ENCODE measurements at regions of chr13 and their contacts with region 1.

Region 1: DNA sequence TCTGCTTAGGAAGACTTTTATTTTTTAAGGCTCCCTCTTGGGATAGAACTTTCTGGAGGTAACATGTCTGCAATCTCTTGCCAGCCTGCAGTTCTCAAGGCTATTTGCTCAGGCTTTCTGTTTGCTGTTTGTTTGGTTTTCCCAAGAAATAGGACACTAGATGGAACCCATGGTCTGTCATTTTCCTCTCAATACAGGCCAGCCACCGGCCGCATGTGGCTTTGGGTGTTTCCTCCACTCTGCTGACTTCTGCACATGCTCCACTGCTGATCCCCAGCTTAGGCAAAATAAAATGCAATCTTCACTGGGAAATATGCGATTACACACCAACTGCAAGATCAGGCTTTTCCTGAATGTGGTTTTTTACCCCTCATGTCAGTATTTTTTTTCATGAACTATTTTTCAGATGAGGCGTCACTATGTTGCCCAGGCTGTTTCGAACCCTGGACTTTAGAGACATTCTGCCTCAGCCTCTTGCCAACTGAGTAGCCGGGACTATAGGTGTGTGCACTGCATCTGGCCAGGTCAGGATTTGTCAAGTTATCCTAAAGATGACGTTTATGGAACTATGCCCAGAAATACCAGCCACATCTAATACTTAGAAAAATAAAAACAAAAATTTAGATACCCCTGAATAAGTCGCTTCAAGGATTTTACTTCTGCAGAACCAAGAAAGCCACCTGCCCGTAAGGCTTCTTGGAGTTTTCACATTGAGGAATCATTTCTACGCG is 94.3 kb upstream of the PABPC3 start:
- DNase-seq: no peak
- ATAC-seq: no peak
- H3K4me3 ChIP-seq: no peak overlapping the region
- H3K27ac ChIP-seq: no peak overlapping the region
- H3K4me1 ChIP-seq: no peaks in the 10 kb centered on the region
- H3K27me3 ChIP-seq: no peaks in the 10 kb centered on the region

Region 2: GRCh38 chr13:25037057-25037813 is 35.6 kb after region 1 on chr13:
- intact Hi-C with region 1: loop called in 1 of 4 experiments (anchors 2 kb)
- DNase-seq: no peak
- ATAC-seq: peak in 1 of 2 donors; percentile 68
- H3K4me3 ChIP-seq: no peak overlapping the region
- H3K27ac ChIP-seq: no peak overlapping the region
- H3K4me1 ChIP-seq: no peaks in the 10 kb centered on the region
- H3K27me3 ChIP-seq: peaks cover 2% of the 10 kb centered on the region

Region 3: GRCh38 chr13:25286969-25287961 is 285.6 kb after region 1 on chr13 and contains the start of gene MTMR6:
- intact Hi-C with region 1: no loop called
- DNase-seq: peak; percentile 93 to 98 (median 96)
- ATAC-seq: peak; percentile 98
- H3K4me3 ChIP-seq: peak within 1 kb of the TSS; percentile 96
- H3K27ac ChIP-seq: peak within 1 kb of the TSS; percentile 76
- H3K4me1 ChIP-seq: no peaks in the 10 kb centered on the region
- H3K27me3 ChIP-seq: no peaks in the 10 kb centered on the region
- total RNA-seq, gene MTMR6: 15.8 to 17.3 (median 17.0) TPM

Region 4: DNA sequence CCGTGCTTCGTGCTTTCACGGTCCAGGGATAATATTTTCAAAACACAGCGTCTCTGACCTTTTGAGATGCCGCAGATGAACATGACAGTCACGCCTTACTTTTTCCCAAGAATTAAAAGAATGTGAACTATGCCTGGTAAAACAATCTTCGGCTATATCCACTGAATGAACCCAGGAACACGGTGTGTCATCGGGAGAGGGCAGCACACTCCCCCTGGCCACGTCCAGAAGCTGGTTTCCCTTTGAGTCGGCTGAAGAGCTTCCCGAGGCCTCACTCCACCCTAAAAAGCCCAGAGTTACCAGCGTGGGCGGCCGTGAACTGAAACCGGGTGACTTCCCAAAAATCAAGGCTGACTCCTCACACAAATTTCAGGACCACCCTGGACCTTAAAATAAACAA is 1073.1 kb after region 1 on chr13:
- intact Hi-C with region 1: loop called in 1 of 4 experiments (anchors 10 kb)
- DNase-seq: no peak
- ATAC-seq: peak in 1 of 2 donors; percentile 35
- H3K4me3 ChIP-seq: no peak overlapping the region
- H3K27ac ChIP-seq: no peak overlapping the region
- H3K4me1 ChIP-seq: no peaks in the 10 kb centered on the region
- H3K27me3 ChIP-seq: no peaks in the 10 kb centered on the region